Heart left ventricle (tissue), 16 donors: ENCODE measurements at regions of chr13 and their contacts with region 1.

Region 1: DNA sequence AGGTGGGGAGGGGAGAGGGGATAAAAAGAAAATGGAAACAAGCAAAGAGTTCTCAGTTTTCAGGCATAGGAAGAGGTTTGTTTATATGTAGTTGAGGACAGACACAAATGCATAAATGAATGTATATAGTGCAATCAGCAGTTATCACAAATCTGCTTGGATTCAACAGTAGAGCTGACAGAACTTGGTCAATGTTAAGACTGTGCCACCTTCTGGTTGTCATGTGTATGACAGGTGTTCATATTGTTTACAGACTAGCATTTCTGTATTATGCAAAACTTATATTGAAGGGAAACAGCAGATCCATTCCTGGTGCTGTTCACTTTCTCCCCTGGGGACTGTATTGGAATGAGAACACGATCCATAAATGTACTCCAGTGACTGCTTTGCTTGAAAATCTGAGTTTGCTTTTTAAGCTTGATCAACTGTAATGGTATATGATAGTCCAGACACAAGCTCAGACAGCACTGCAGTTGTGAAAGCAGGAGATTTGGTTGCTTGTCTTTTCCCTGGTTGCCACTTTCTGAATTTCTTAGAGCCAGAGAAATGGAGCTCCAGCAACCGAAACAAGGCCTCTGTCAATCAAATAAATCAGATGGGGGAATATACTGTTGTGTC is 319.5 kb upstream of the OBI1 start:
- DNase-seq: peak in 1 of 5 donors; percentile 14
- ATAC-seq: peak in 2 of 4 donors; percentile 44 to 59
- H3K4me3 ChIP-seq: no peak overlapping the region
- H3K27ac ChIP-seq: no peak overlapping the region
- H3K4me1 ChIP-seq: no peaks in the 10 kb centered on the region
- H3K27me3 ChIP-seq: peaks cover 0 to 28% (median 0%) of the 10 kb centered on the region in 9 donors
- CTCF ChIP-seq: peak; percentile 52 to 77 (median 66)
- POLR2A ChIP-seq: no peak

Region 2: DNA sequence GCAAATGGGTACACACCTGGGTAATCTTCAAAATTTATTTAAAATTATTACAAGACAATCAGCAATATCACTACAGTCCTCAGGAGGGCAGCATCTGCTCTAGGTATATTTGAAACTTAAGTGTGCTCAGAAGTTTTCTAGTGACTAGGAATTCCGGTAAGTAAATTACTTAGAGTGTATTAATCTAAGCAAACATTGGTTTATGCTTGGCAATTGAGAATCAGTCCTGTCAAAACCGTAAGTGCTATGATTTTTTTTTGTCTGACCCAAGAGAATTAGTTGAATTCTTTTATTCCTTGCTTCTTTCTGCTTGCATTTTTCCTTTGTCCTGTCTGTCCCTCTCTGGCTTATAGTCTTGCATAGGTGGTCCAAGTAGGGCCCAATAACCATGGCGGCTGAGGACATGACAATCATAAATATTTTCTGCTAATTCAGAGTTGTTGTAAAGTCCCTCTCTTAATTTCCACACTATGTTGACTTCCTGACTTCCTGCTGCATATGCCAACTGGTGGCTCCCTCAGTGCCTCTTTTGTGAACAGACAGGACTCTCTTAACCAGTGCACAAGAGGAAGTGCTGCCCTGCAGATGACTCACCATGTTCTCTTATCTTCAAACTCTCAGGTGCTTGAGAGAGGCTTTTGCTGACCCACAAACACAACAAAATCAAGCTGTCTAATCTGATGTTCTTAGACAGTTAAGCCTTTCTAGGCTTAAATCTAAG is 1198.8 kb before region 1 on chr13:
- intact Hi-C with region 1: loop called in 1 of 10 experiments (anchors 10 kb)
- DNase-seq: peak in 2 of 5 donors; percentile 31 to 34
- ATAC-seq: peak in 3 of 4 donors; percentile 70 to 75 (median 71)
- H3K4me3 ChIP-seq: no peak overlapping the region
- H3K27ac ChIP-seq: peak overlapping the region in 1 of 12 donors; percentile 65
- H3K4me1 ChIP-seq: peaks cover 0 to 9% (median 0%) of the 10 kb centered on the region in 12 donors
- H3K27me3 ChIP-seq: no peaks in the 10 kb centered on the region
- CTCF ChIP-seq: peak; percentile 58 to 89 (median 74)
- POLR2A ChIP-seq: no peak

Region 3: GRCh38 chr13:78137404-78138142 is 840.9 kb before region 1 on chr13:
- intact Hi-C with region 1: loop called (anchors 1 to 5 kb)
- DNase-seq: no peak
- ATAC-seq: peak; percentile 64 to 83 (median 73)
- H3K4me3 ChIP-seq: no peak overlapping the region
- H3K27ac ChIP-seq: no peak overlapping the region
- H3K4me1 ChIP-seq: peaks cover 0 to 3% (median 0%) of the 10 kb centered on the region in 12 donors
- H3K27me3 ChIP-seq: peaks cover 0 to 4% (median 0%) of the 10 kb centered on the region in 9 donors
- CTCF ChIP-seq: peak; percentile 56 to 82 (median 68)
- POLR2A ChIP-seq: no peak

Region 4: DNA sequence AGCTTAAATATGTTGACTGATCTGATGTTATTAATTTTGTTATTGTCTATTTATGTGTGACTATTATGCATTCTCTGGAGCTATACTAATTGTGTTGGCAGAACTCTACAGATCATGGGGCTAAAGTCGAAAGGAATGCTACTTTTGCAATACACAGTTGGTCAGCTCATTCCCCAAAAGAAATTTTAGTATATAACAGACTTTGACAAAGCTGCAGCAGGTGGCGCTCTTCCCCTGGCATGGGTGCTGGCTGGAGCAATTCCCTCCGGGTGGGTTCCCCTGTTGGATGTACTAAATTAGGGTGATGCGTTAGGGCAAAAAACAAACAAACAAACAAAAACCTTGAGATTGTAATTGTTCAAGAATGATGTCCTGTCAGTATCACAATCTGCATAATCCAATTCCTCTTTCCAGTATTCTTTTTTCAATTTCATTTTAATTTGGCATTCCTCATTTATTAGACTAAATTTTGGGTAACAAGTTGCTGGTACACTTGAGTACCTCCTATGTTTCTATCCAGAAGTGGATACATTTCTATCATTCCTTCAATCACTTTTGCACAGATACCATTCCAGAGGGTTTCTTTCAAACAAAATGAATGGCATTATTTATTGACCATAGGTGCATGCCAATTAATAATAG is 737.1 kb before region 1 on chr13:
- intact Hi-C with region 1: loop called in 5 of 10 experiments (anchors 2 to 10 kb)
- DNase-seq: peak in 3 of 5 donors; percentile 13 to 52 (median 16)
- ATAC-seq: no peak
- H3K4me3 ChIP-seq: no peak overlapping the region
- H3K27ac ChIP-seq: no peak overlapping the region
- H3K4me1 ChIP-seq: no peaks in the 10 kb centered on the region
- H3K27me3 ChIP-seq: no peaks in the 10 kb centered on the region
- CTCF ChIP-seq: peak in 11 of 12 donors; percentile 15 to 59 (median 41)
- POLR2A ChIP-seq: no peak

Region 5: GRCh38 chr13:78317030-78317429 is 661.5 kb before region 1 on chr13:
- intact Hi-C with region 1: loop called in 7 of 10 experiments (anchors 5 to 10 kb)
- DNase-seq: no peak
- ATAC-seq: no peak
- H3K4me3 ChIP-seq: no peak overlapping the region
- H3K27ac ChIP-seq: no peak overlapping the region
- H3K4me1 ChIP-seq: no peaks in the 10 kb centered on the region
- H3K27me3 ChIP-seq: peaks cover 0 to 6% (median 0%) of the 10 kb centered on the region in 9 donors
- CTCF ChIP-seq: peak; percentile 14 to 59 (median 46)
- POLR2A ChIP-seq: no peak